ENCODE measurements at regions of chr16 and their contacts with region 1.

Region 1: GRCh38 chr16:4402439-4403132 is 13.8 kb downstream of the CORO7 start:
- DNase-seq: no peak
- ATAC-seq: peak; percentile 92
- H3K4me3 ChIP-seq: no peak overlapping the region
- H3K27ac ChIP-seq: no peak overlapping the region
- H3K4me1 ChIP-seq: no peaks in the 10 kb centered on the region
- H3K27me3 ChIP-seq: no peaks in the 10 kb centered on the region
- CTCF ChIP-seq: peak; percentile 97

Region 2: DNA sequence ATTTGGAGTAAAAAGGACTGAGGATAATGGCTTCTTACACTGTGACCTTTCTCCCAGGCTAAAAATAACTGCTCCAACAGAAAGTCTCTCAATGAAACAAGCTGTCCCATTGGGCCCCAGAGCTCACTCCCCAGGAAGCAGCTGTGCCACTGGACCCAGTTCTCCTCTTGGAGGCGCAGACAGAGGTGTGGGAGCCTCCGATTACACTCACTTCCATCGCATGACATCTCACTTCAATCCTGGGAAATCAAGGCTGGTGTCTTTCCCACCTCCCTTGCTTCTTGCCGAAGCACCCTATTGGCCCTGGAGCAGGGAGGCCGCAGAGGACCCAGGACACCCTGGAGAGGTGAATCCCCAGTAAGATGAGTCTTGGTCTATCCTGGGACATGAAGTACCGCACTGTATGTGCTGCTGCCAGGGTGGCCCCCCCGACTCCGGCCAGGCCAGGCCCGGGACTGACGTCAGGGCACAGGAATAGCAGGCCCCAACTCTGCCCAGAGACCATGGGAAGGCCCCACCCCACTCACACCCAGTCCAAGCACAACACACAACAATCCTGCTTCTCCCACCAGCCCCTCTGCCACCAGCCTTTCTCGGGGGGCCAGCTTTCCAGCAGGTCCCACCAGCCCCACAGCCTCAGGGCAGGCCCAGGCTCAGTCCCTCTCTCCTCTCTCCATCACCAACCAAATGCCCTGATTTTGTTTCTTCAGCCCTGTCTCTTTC is 190.2 kb before region 1 on chr16:
- CTCF ChIA-PET with region 1: no interaction called
- POLR2A ChIA-PET with region 1: no interaction called
- in situ Hi-C with region 1: no loop called
- intact Hi-C with region 1: no loop called
- DNase-seq: no peak
- ATAC-seq: peak; percentile 13; the same call in 1 of the 2 replicates
- H3K4me3 ChIP-seq: no peak overlapping the region
- H3K27ac ChIP-seq: no peak overlapping the region
- H3K4me1 ChIP-seq: no peaks in the 10 kb centered on the region
- H3K27me3 ChIP-seq: no peaks in the 10 kb centered on the region
- CTCF ChIP-seq: no peak

Region 3: DNA sequence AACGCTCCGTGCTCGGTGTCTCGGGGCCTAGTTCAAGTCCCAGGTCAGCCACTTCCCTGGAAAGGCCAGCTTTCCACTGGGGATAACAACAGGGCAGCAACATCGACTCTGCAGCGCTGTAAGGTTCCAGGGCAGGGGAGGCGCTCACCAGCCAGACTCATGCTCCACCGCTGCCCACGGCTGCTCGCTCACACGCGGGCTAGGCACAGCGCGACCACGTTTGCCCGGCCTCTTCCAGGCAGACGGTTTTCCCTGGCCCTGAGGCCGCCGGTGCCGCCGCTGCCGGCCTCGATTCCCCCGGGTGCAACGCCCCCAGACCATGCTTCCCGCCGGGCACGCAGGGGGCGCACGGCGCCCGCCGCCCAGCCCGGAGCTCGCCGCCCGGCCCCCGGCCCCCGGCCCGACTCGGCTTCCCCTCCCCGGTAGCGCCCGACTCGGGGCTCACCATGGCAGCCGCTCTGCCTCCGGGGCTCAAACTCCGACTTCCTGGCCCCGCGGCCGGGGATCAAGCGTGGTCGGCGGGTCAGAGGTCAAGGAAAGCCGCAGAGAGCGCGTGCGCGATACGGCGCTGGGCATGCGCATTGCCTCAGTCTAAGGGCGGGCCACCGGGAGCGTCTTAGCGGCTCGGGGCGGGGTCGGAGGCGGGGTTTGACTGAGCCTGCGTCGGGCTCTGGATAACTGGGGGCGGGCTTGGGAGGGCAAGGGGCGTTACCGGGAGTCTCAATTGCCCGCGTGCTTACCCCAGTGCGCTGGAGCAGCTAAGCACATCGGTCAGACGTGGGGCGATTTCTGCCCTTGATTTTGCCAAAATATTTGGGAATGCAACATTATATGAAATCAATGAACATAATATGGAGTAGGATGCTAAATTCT is 51.6 kb before region 1 on chr16 and contains the start of gene PAM16:
- CTCF ChIA-PET with region 1: interaction called, 15 read pairs
- POLR2A ChIA-PET with region 1: no interaction called
- in situ Hi-C with region 1: no loop called
- intact Hi-C with region 1: no loop called
- DNase-seq: peak; percentile 65
- ATAC-seq: peak; percentile 96
- H3K4me3 ChIP-seq: peak within 1 kb of the TSS; percentile 75 to 92
- H3K27ac ChIP-seq: peak within 1 kb of the TSS; percentile 89
- H3K4me1 ChIP-seq: peaks cover 32% of the 10 kb centered on the region
- H3K27me3 ChIP-seq: no peaks in the 10 kb centered on the region
- CTCF ChIP-seq: no peak
- total RNA-seq, gene PAM16: 104 TPM

Region 4: GRCh38 chr16:4358831-4359561 is 43.6 kb before region 1 on chr16:
- CTCF ChIA-PET with region 1: interaction called, 35 read pairs
- POLR2A ChIA-PET with region 1: no interaction called
- in situ Hi-C with region 1: no loop called
- intact Hi-C with region 1: loop called (anchors 1 kb)
- DNase-seq: no peak
- ATAC-seq: peak; percentile 73
- H3K4me3 ChIP-seq: no peak overlapping the region
- H3K27ac ChIP-seq: no peak overlapping the region
- H3K4me1 ChIP-seq: no peaks in the 10 kb centered on the region
- H3K27me3 ChIP-seq: no peaks in the 10 kb centered on the region
- CTCF ChIP-seq: peak; percentile 96